ENCODE measurements at regions of chr13 and their contacts with region 1.

Region 1: DNA sequence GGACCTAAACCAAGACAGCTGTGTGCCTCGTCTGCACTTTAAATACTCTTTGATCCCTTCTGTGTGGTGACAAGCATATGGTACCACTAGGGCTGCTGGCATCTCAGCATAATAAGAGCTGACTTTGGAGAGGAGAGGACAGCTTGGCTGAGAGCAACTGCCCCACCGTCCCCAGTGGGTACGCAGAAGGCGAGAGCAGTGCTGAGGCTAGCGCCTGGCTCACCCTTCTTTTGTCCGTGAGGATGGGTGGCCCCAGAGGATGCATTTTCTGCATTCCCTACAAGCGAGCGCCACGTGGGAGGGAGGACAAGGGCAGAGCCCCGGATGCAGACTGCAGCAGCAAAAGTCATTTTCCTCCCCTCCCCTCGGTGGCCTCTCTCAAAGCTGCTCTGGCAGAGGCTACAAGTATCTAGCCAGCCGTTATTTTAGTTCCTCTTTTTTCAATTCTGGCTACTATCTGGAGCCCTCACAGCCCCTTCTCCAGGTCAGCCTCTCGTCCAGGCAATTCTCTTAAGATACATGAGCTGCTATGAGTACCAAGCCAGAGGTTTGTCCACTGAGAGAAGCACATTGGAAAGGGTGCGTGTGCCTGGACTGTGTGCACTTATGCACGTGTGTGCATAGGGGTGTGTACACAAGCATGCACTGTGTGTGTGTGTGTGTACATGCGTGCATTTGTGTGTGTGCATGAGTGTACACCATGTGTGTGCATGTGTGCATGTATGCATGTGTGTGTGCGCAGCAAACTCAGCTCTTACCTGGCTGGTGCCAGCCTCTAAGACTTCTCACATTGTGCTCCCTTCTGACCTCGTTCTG is 51.3 kb downstream of the RAB20 start:
- DNase-seq: no peak
- H3K4me3 ChIP-seq: no peak overlapping the region
- H3K27ac ChIP-seq: no peak overlapping the region
- H3K4me1 ChIP-seq: peaks cover 6% of the 10 kb centered on the region
- H3K27me3 ChIP-seq: no peaks in the 10 kb centered on the region
- CTCF ChIP-seq: no peak

Region 2: DNA sequence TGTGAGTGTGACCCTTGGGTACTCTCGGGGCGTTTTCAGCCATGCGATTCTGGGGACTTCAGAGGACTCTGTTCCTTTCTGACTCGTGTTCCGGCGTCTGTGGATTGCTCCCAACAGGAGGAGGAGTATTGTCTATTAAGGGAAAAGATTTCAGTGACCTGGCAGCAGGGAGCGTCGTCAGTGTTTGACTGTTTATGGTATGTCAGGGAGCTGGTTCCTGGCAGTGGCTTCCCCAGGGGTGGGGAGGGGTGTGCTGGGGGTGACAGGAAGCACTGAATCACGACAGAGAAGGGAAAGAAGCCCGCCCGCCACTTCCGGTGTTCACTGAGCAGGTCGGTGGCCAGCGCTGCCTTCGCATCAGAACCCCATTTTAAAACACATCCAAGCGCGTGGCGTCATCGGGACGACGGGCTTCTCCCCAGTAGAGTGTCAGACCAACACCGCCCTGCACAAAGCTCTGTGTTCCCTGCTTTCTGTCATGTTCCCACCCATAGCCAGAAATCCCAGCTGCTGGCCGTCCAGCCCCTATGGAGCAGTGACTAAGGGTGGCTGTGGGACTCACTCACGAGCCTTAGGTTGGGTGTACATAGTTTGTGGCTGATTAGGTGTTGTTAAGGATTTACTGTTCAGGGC is 169.3 kb before region 1 on chr13:
- intact Hi-C with region 1: no loop called
- DNase-seq: peak; percentile 54
- H3K4me3 ChIP-seq: no peak overlapping the region
- H3K27ac ChIP-seq: peak overlapping the region; percentile 69
- H3K4me1 ChIP-seq: no peaks in the 10 kb centered on the region
- H3K27me3 ChIP-seq: no peaks in the 10 kb centered on the region
- CTCF ChIP-seq: no peak

Region 3: GRCh38 chr13:110561344-110562035 is 51.3 kb after region 1 on chr13 and contains the start of gene RAB20:
- intact Hi-C with region 1: loop called (anchors 5 kb)
- DNase-seq: peak; percentile 95
- H3K4me3 ChIP-seq: peak within 1 kb of the TSS; percentile 84
- H3K27ac ChIP-seq: peak within 1 kb of the TSS; percentile 93
- H3K4me1 ChIP-seq: peaks cover 2% of the 10 kb centered on the region
- H3K27me3 ChIP-seq: no peaks in the 10 kb centered on the region
- CTCF ChIP-seq: no peak
- total RNA-seq, gene RAB20: 32.1 to 38.0 TPM

Region 4: DNA sequence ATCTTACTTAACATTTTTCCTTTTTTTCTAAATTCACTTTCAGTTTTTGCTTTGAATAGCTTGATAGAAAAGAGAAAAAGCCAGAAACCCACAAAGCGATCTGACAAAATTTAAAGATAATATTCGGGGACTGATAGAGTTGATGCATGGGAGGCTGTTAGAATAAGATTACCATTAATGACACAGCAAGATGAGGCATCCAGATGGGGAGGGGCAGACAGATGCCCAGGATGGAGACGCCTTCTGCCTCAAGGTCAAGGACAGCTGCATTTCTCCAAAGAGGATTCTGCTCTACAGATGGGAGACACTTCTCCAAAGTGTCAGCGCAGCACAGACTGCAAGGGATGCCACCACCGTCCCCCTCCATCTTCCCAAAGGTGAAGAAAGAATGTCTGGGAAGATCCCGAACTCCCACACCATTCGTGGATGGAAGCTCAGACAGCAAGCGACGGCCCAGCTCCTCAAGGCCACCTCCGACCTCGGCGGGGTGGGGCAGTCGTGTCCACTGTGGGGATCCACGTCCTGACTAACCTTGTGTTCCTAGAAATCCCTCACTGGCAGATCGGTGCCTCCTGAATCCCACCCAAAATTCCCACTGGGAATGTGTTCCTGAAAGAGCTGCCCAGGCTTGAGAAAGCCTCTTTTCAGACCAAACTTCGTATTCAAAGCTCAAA is 138.1 kb after region 1 on chr13:
- intact Hi-C with region 1: no loop called
- DNase-seq: peak; percentile 11
- H3K4me3 ChIP-seq: no peak overlapping the region
- H3K27ac ChIP-seq: no peak overlapping the region
- H3K4me1 ChIP-seq: no peaks in the 10 kb centered on the region
- H3K27me3 ChIP-seq: no peaks in the 10 kb centered on the region
- CTCF ChIP-seq: no peak

Region 5: DNA sequence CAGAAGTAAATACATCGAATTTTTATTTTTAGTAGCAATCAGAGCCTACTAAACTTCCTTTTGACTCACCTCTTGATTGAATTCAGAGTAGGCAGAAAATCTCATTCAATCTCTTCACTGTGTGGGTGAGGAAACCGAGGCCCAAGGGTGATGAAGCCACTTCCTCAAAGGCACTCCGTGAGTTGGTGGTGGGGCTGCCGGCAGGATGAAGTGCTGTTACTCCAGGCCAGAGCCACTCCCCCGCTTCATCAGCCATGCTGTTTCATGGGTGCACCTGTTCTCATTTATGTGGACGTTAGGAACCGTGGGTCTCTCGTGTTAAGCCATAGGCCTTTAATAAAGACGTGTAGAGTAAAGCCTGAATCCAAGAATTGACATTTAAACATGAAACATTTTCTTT is 216.5 kb after region 1 on chr13:
- intact Hi-C with region 1: no loop called
- DNase-seq: no peak
- H3K4me3 ChIP-seq: no peak overlapping the region
- H3K27ac ChIP-seq: no peak overlapping the region
- H3K4me1 ChIP-seq: no peaks in the 10 kb centered on the region
- H3K27me3 ChIP-seq: no peaks in the 10 kb centered on the region
- CTCF ChIP-seq: no peak

Measured in colonic mucosa (tissue), 4 donors.